ENCODE measurements at regions of chr6 and their contacts with region 1.

Region 1: DNA sequence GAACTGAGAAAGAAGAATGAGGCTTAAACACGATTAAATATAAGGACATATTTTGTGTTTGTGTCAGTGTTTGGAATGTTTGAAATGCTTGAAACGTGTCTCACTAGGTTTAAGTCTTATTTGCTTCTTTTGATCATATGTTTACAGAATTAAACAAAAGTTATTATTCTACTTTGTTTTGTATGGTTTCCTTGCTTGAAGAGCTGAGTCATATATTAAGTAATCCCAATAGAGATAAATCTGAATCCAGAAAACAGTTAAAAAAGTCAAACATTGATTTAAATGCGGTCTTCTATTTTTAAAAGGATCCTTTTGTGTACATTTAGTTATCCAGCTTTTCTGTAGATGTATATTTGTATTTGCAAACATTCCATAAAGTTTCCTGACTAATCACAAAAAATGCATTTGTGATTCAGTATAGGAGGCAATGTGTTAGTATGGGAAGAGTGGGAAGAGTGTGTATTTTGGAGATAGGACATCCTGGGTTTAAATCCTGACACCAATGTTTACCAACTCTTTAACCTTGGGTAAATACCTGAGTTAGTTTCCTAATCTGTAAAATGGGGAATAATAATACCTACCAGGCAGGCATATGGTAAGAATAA is 72.9 kb downstream of the TSBP1 start:
- DNase-seq: peak; percentile 94
- ATAC-seq: peak; percentile 79
- H3K4me3 ChIP-seq: no peak overlapping the region
- H3K27ac ChIP-seq: peak overlapping the region; percentile 80
- H3K4me1 ChIP-seq: peaks cover 39% of the 10 kb centered on the region
- H3K27me3 ChIP-seq: no peaks in the 10 kb centered on the region
- CTCF ChIP-seq: no peak

Region 2: DNA sequence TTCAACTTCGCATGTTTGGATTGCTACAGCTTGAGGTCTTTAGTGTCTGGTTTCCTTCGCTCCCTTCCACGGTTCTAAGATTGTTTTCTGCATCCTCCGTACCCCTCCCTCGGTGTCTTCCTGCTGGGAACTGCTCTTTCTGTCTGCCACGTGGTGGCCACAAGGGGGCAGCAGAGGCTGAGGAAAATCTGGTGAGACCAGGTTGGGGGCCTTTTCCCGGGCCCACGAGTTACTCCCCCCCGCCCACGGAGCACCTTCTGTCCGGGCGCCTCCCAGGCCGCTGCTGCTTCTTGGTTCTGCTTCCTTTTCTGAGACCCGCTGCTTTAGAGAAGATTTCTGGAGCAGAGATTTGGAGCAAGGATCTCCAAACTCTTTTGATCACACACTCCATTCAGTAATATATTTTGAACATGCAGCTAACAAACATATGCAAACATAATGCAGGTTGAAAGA is 53.8 kb before region 1 on chr6:
- CTCF ChIA-PET with region 1: interaction called, 11 read pairs
- POLR2A ChIA-PET with region 1: interaction called, 5 read pairs
- intact Hi-C with region 1: loop called (anchors 1 kb)
- DNase-seq: peak; percentile 83
- ATAC-seq: peak; percentile 92
- H3K4me3 ChIP-seq: peak overlapping the region; percentile 17; the same call in 1 of the 2 replicates
- H3K27ac ChIP-seq: no peak overlapping the region
- H3K4me1 ChIP-seq: 0 out of 2 replicates have a peak, but pooled peaks cover 5% of the 10 kb centered on the region
- H3K27me3 ChIP-seq: no peaks in the 10 kb centered on the region
- CTCF ChIP-seq: peak; percentile 94

Region 3: DNA sequence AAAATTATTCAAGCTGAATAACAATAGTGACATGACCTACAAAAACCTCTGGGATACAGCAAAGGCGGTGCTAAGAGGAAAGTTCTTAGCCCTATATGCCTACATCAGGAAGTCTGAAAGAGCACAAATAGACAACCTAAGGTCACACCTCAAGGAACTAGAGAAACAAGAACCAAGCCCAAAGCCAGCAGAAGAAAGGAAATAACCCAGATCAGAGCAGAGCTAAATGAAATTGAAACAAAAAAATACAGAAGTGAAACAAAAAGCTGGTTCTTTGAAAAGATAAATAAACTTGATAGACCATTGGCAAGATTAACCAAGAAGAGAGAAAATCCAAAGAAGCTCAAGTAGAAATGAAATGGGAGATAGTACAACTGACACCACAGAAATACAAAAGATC is 27.3 kb before region 1 on chr6:
- CTCF ChIA-PET with region 1: interaction called, 6 read pairs
- POLR2A ChIA-PET with region 1: no interaction called
- intact Hi-C with region 1: loop called (anchors 1 kb)
- DNase-seq: no peak
- ATAC-seq: no peak
- H3K4me3 ChIP-seq: no peak overlapping the region
- H3K27ac ChIP-seq: no peak overlapping the region
- H3K4me1 ChIP-seq: peaks cover 17% of the 10 kb centered on the region
- H3K27me3 ChIP-seq: no peaks in the 10 kb centered on the region
- CTCF ChIP-seq: no peak

Region 4: GRCh38 chr6:32369675-32370074 is 70.9 kb after region 1 on chr6:
- CTCF ChIA-PET with region 1: no interaction called
- POLR2A ChIA-PET with region 1: no interaction called
- intact Hi-C with region 1: loop called (anchors 2 kb)
- DNase-seq: peak; percentile 97
- ATAC-seq: peak; percentile 84
- H3K4me3 ChIP-seq: no peak overlapping the region
- H3K27ac ChIP-seq: peak overlapping the region; percentile 93
- H3K4me1 ChIP-seq: peaks cover 36% of the 10 kb centered on the region
- H3K27me3 ChIP-seq: no peaks in the 10 kb centered on the region
- CTCF ChIP-seq: no peak

Region 5: GRCh38 chr6:32387589-32388340 is 89.0 kb after region 1 on chr6:
- CTCF ChIA-PET with region 1: no interaction called
- POLR2A ChIA-PET with region 1: no interaction called
- intact Hi-C with region 1: no loop called
- DNase-seq: no peak
- ATAC-seq: no peak
- H3K4me3 ChIP-seq: no peak overlapping the region
- H3K27ac ChIP-seq: no peak overlapping the region
- H3K4me1 ChIP-seq: no peaks in the 10 kb centered on the region
- H3K27me3 ChIP-seq: no peaks in the 10 kb centered on the region
- CTCF ChIP-seq: no peak

Region 6: DNA sequence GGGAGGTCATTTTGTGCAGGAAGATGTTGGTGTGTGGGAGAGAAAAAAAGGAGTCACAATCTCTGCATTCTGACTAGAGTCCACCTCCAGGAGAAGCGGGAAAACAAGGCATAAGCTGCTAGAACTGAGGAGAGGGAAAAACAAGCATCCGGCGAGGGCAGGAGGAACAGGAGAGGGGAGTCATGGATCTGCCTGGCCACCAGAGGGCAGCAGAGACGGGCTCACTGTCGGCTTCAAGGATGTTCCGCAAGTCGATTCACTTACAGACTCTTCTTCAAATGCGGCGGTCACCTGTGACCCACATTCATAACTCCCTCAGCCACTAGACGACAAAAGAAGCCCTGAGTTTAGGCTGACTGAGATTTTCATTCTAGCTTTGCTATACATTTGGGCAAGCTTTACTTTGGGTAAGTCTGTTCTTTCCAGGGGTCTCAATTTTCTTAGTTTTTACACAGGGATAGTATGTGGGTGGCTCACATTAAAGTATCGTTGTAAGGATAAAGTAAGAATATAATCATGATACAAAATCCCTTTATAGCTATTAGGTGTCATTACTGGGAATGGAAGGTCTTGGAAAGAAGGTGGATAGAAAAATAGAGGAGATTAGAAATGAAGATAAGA is 114.8 kb after region 1 on chr6:
- CTCF ChIA-PET with region 1: interaction called, 3 read pairs
- POLR2A ChIA-PET with region 1: no interaction called
- intact Hi-C with region 1: loop called (anchors 1 kb)
- DNase-seq: peak; percentile 83
- ATAC-seq: peak; percentile 79
- H3K4me3 ChIP-seq: peak overlapping the region; percentile 43; the same call in 1 of the 2 replicates
- H3K27ac ChIP-seq: no peak overlapping the region
- H3K4me1 ChIP-seq: peaks cover 4% of the 10 kb centered on the region; the same call in 1 of the 2 replicates
- H3K27me3 ChIP-seq: peaks cover 9% of the 10 kb centered on the region
- CTCF ChIP-seq: peak; percentile 92